ENCODE measurements at regions of chr2 and their contacts with region 1.

Region 1: DNA sequence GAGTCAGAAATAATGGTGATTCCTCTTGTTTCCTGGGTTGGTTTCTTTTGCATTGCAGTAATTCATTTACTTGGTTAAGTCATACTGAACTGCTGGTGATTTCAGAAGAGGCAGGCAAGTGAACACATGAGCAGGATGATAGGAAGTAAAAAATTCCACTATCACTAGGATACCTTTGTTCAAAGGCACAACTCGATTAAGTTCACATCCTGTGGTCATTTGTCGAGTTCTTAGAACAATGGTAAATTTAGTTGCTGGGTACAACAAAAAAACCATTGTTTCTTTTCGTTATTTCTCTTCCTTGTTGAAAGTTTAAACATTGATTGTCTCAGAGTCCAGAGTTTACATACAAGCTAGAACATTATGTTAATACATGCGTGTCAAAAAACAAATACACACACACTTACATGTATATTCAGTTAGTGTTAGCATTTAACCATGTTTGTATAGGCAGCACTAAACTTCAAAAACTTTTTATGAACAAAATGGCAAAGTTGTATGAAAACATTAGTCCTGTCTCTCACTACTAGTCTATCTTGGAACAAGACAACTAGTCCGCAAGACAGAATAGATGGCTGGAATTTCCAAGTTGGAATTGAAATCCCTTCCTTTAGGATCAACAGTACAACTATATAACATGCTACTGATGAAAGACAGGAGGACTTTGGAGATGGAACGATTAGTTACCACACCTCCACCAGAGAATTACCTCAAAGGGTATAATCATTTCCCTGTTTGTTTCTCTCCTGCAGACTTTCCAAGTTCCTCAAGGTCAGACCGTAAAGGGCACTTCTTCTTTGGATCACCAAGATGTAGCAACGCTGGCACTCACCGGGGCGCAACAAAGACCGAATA is 26.2 kb downstream of the STK39 start:
- DNase-seq: no peak

Region 2: DNA sequence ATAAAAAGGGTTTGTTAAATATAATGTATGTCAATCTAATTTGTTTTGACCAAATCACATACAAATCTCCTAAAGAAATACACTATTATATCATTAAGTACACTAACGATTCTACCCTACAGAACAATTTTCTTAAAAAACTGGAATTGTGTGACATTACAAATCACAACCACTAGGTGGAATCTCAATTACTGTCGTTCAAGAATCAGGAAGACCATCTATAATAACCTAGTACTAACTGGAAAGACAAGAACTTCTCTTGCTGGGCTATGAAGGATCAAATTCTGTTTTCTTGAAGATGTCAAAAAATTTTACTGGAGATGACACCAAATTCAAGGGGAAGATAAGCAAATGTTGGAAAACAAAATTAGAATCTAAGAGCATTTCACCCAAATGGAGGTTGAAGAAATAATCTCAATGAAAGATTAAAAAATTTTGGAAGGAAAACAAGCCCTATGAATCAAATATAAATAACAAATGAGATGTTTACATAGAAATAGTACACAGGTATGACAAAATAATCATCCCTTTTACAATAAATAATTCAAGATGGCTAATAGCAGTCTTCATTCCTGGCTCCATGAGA is 84.7 kb before region 1 on chr2:
- CTCF ChIA-PET with region 1: no interaction called
- POLR2A ChIA-PET with region 1: no interaction called
- DNase-seq: peak; percentile 27

Region 3: GRCh38 chr2:168434146-168434545 is 213.0 kb after region 1 on chr2:
- CTCF ChIA-PET with region 1: interaction called, 10 read pairs
- POLR2A ChIA-PET with region 1: no interaction called
- DNase-seq: no peak

Measured in HEK293T (cell line).